ENCODE measurements at regions of chr2 and their contacts with region 1.

Region 1: GRCh38 chr2:26165403-26165802 is 7.5 kb upstream of the GAREM2 start:
- DNase-seq: no peak
- H3K4me3 ChIP-seq: no peak overlapping the region
- H3K27me3 ChIP-seq: peaks cover 4% of the 10 kb centered on the region; the same call in 1 of the 2 replicates
- CTCF ChIP-seq: no peak

Region 2: DNA sequence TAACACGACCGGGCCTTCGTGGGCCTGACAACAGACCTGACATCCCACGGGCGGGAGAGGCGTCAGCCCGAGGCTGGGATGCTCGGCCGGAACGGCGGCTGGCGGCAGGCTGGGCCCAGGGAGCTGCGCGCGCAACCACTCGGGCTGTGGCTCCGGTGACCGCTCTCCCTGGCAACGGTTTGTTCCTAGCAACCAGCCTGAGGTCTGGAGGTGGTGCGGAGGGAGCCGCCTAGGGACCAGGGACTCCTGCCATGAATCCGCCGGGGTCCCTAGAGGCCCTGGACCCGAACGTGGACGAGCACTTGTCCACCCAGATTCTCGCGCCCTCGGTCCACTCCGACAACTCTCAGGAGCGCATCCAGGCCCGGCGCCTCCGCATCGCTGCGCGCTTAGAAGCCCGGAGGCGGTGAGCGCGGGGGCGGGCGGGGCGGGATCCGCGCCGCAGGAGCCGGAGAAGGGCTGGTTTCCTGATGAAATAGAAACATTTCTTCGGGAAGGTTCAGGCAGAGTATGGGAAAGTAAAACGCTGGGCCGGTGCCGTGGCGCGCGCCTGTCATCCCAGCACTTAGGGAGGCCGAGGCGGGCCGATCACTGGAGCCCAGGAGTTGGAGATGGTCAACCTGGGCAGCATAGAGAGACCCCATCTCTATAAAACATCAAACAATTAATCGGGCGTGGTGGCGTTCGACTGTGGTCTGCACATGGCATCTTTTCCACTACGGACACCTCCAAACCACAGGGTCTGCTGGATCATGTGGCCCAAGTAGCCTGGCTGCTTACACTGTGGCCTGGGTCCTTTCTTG is 236.5 kb after region 1 on chr2 and contains the start of gene DRC1:
- CTCF ChIA-PET with region 1: no interaction called
- POLR2A ChIA-PET with region 1: interaction called, 19 read pairs
- DNase-seq: peak; percentile 23
- H3K4me3 ChIP-seq: peak within 1 kb of the TSS; percentile 51
- H3K27me3 ChIP-seq: no peaks in the 10 kb centered on the region
- CTCF ChIP-seq: no peak
- polyA plus RNA-seq, gene DRC1: 0.05 and 0.22 TPM in 2 replicates

Measured in BJ (cell line).